Sigmoid colon (tissue), 7 donors: ENCODE measurements at regions of chr6 and their contacts with region 1.

Region 1: DNA sequence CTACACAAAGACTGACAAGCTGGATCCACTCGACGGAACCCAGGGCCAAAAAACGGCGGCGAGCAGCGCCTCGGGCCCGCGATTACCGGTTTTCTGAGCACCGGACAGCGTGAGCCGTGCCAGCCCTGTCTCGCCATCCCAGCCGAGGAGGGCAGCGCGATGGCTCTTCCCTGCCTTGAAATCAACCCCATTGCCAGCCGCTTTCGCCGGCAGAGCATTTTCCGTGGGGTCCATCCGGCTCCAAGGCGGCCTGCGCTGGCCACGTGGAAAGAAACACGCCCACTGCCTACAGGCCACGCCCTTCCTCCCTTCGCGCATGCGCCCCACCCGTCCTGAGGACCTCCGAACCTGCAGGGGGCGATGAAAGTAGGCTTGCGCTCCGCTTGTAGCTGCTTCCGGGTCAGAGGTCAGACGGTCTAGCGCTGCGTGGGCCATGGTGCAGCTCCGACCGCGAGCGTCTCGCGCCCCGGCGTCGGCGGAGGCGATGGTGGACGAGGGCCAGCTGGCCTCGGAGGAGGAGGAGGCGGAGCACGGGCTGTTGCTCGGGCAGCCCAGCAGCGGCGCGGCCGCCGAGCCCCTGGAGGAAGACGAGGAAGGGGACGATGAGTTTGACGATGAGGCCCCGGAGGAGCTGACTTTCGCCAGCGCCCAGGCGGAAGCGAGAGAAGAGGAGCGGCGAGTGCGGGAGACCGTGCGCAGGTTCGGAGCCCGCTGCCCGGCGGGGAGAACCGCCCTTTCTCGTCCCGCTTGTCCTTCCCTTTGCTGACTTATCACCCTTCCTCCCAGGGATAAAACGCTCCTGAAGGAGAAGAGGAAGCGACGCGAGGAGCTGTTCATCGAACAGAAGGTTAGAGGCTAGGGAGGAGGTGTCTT is at the start of gene NOL7:
- DNase-seq: peak; percentile 99
- H3K4me3 ChIP-seq: peak within 1 kb of the TSS; percentile 61 to 91 (median 72)
- H3K27ac ChIP-seq: peak within 1 kb of the TSS; percentile 84 to 95 (median 86)
- H3K4me1 ChIP-seq: peaks cover 0 to 30% (median 26%) of the 10 kb centered on the region in 4 donors
- H3K27me3 ChIP-seq: no peaks in the 10 kb centered on the region
- CTCF ChIP-seq: peak; percentile 83 to 94 (median 89)
- EP300 ChIP-seq: no peak
- POLR2A ChIP-seq: peak; percentile 62 to 84
- total RNA-seq, gene NOL7: 87.8 to 97.6 (median 89.8) TPM

Region 2: DNA sequence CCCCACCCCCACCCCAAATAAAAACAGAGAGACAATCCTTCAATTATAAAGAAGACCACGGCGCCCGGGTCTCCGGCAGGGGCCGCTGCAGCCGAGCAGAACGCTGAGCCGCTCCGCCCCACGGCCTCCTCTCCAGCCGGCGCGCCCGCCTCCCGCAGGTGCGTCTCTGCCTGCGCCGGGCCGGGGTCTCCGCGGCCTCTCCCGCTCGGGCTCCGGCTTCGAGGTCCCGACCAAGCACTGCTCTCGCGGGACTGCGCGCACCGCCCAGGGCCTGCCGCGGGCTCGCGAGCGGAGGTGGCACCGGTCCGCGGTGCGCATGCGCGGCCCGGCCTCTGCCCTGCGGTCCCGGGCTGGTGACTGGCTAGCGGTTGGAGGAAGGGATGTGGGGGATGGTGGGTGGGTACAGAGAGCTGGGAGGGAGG is 41.0 kb before region 1 on chr6:
- intact Hi-C with region 1: loop called (anchors 2 kb)
- DNase-seq: peak; percentile 95
- H3K4me3 ChIP-seq: peak overlapping the region; percentile 61 to 97 (median 87)
- H3K27ac ChIP-seq: peak overlapping the region; percentile 88 to 99 (median 98)
- H3K4me1 ChIP-seq: peaks cover 0 to 18% (median 8%) of the 10 kb centered on the region in 4 donors
- H3K27me3 ChIP-seq: no peaks in the 10 kb centered on the region
- CTCF ChIP-seq: peak in 1 of 4 experiments; percentile 45
- EP300 ChIP-seq: no peak
- POLR2A ChIP-seq: no peak

Region 3: DNA sequence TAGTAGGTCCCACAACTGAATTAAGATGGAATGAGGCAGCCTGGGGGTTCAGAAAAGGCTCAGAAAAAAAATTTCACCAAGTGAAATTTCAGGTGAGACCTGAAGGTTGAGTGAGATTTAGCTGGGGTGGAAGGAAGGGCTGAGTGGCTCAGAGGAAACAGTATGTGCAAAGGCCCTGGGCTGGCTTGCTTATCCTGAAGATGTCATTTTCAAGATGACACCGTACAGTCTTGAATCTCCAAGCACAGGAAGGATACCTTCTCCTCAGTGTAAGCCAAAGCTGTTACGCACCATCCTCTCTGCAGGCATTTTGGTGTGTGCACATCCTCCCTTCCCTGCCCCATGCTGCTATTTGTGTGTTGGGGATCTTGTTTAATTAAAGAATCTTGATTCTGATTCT is 139.5 kb after region 1 on chr6:
- intact Hi-C with region 1: no loop called
- DNase-seq: no peak
- H3K4me3 ChIP-seq: no peak overlapping the region
- H3K27ac ChIP-seq: peak overlapping the region in 2 of 4 donors; percentile 8 to 49
- H3K4me1 ChIP-seq: peaks cover 0 to 10% (median 0%) of the 10 kb centered on the region in 4 donors
- H3K27me3 ChIP-seq: no peaks in the 10 kb centered on the region
- CTCF ChIP-seq: no peak
- EP300 ChIP-seq: no peak
- POLR2A ChIP-seq: no peak

Region 4: DNA sequence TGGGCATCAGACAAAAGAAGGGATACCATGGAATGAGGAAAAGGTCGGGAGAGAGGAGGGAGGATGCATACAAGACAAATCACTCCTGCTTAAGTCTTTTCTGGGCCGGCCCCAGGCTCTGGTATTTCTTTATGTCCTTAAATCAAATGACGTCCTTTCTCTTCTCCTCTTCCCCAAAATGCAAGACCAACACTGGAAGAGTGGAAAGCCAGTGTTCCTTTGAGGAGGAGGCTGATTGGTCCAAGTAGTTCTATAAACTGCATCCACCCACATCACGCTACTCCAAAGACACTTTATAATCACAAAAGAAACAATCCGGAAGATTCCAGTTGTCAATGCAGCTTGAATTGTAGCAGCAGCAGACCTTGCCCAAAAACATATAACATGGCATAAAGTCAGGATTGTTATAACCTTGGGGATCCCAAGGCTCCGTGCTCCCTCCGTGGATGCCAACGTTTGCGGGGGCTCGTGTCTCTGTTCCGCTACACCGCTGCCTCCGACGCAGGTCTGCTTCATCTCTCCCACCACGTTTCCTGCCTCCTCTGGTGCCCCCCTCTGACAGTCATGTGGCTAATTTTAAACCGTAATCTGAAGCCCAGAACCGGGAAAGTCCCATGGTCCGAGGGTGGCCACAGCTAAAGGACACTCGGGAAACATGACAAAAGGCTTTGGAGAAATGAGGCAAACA is 152.1 kb after region 1 on chr6:
- intact Hi-C with region 1: loop called (anchors 1 kb)
- DNase-seq: peak; percentile 89
- H3K4me3 ChIP-seq: peak overlapping the region; percentile 10 to 45 (median 42)
- H3K27ac ChIP-seq: peak overlapping the region; percentile 46 to 79 (median 76)
- H3K4me1 ChIP-seq: peaks cover 0 to 34% (median 27%) of the 10 kb centered on the region in 4 donors
- H3K27me3 ChIP-seq: no peaks in the 10 kb centered on the region
- CTCF ChIP-seq: no peak
- EP300 ChIP-seq: peak in 2 of 4 donors; percentile 29 to 44
- POLR2A ChIP-seq: peak in 1 of 2 donors; percentile 18

Region 5: DNA sequence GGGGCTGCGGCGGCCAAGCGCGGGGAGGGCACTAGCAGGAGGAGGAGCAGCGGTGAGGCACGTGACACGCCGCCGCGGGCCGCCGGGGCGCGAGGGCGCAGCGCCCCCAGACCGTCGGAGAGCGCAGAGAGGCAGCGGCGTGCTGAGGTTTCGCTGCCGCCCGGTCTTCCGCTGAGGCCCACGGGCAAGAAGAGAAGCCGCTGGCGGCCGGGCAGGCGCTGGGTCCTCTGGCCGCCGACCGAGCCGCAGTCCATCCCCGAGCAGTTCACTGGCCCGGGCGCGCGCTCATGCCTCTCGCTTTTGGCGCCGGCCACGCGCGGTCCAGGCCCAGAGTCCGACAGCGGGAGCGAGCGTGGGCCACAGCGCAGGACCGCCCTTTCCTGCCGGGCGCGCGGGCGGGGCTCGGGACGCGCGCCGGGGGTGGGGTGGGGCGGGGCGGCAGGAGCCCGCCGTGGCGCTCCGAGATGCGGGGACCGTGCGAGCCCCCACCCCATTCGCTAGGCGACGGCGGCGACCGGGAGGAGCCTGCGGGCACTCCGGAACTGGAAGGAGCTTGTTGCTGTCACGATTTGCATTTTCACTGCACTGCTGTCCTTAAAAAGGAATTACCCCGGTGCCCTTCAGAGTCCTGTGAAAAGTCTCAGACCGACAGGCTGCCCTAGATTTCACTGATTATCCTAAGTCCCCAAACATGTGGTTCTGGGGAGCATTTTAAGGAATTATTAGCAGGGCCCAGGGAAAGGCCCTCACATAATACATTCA is 199.2 kb after region 1 on chr6 and contains the start of gene MCUR1:
- intact Hi-C with region 1: loop called (anchors 5 kb)
- DNase-seq: peak; percentile 93
- H3K4me3 ChIP-seq: peak within 1 kb of the TSS; percentile 79 to 86 (median 82)
- H3K27ac ChIP-seq: peak within 1 kb of the TSS; percentile 92 to 99 (median 98)
- H3K4me1 ChIP-seq: peaks cover 0 to 39% (median 36%) of the 10 kb centered on the region in 4 donors
- H3K27me3 ChIP-seq: no peaks in the 10 kb centered on the region
- CTCF ChIP-seq: no peak
- EP300 ChIP-seq: no peak
- POLR2A ChIP-seq: no peak
- total RNA-seq, gene MCUR1: 7.2 to 13.2 (median 9.0) TPM